ENCODE measurements at regions of chr1 and their contacts with region 1.

Region 1: DNA sequence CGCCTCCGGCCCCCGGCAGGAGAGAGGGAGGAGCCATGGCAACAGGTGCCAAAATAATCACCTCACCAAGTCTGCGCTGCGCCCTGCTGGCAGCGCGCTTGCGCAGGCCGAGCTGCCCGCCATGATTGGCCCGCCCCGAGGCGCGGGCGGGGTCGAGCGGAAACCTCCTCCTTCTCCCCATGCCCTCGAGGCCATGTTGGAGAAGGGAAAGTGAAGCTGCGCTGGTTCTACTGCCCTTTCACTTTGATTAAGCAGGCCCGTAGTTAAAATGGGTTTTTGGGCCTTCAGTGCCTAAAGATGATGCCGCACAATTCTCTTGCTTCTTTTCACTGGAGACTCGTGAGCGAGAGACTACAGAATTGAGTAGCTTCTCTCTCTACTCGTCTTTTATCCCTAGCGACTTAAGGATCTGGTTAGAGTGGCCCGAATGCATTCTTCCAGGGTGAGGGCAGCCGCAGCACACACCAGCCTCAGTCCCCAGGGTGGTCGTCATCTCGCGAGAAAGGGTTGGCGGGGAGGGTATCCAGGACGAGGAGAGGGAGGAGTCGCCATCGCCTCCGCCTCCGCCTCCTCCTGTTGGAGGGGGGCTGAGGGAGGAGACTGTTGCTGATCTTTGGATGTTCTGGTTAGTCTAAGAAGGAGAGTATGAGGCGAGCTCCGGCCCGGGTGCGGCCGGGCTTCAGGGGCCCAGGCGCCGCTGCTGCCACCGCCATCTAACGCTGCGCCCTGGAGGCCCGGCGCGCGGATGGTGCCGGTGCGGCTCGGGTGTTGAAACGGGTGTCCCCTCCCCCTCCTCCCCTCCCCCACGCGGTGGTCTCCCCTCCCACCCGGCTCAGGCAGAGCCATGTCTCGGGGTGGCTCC is at the start of gene DCAF6:
- DNase-seq: peak; percentile 98
- H3K4me3 ChIP-seq: peak within 1 kb of the TSS; percentile 86 to 98 (median 94)
- H3K27ac ChIP-seq: peak within 1 kb of the TSS; percentile 90 to 99 (median 98)
- H3K4me1 ChIP-seq: peaks cover 29 to 67% (median 48%) of the 10 kb centered on the region in 4 donors
- H3K27me3 ChIP-seq: no peaks in the 10 kb centered on the region
- CTCF ChIP-seq: no peak
- EP300 ChIP-seq: no peak
- POLR2A ChIP-seq: peak; percentile 84
- total RNA-seq, gene DCAF6: 80.4 to 110 (median 93.9) TPM

Region 2: GRCh38 chr1:167715157-167715999 is 220.9 kb before region 1 on chr1:
- intact Hi-C with region 1: loop called (anchors 2 kb)
- DNase-seq: peak; percentile 96
- H3K4me3 ChIP-seq: peak overlapping the region; percentile 61 to 81 (median 71)
- H3K27ac ChIP-seq: peak overlapping the region; percentile 87 to 94 (median 90)
- H3K4me1 ChIP-seq: peaks cover 7 to 25% (median 20%) of the 10 kb centered on the region in 4 donors
- H3K27me3 ChIP-seq: no peaks in the 10 kb centered on the region
- CTCF ChIP-seq: peak; percentile 80 to 86 (median 86)
- EP300 ChIP-seq: no peak
- POLR2A ChIP-seq: no peak

Region 3: GRCh38 chr1:168007691-168008090 is 71.4 kb after region 1 on chr1:
- intact Hi-C with region 1: no loop called
- DNase-seq: no peak
- H3K4me3 ChIP-seq: no peak overlapping the region
- H3K27ac ChIP-seq: no peak overlapping the region
- H3K4me1 ChIP-seq: peaks cover 0 to 10% (median 6%) of the 10 kb centered on the region in 4 donors
- H3K27me3 ChIP-seq: no peaks in the 10 kb centered on the region
- CTCF ChIP-seq: no peak
- EP300 ChIP-seq: no peak
- POLR2A ChIP-seq: no peak